ENCODE measurements at regions of chr15 and their contacts with region 1.

Region 1: GRCh38 chr15:32956006-32956405 is 238.2 kb downstream of the GREM1 start:
- DNase-seq: no peak
- ATAC-seq: peak; percentile 48; the same call in 1 of the 2 replicates
- H3K4me3 ChIP-seq: no peak overlapping the region
- H3K27ac ChIP-seq: no peak overlapping the region
- H3K4me1 ChIP-seq: no peaks in the 10 kb centered on the region
- H3K27me3 ChIP-seq: no peaks in the 10 kb centered on the region
- CTCF ChIP-seq: peak; percentile 74

Region 2: DNA sequence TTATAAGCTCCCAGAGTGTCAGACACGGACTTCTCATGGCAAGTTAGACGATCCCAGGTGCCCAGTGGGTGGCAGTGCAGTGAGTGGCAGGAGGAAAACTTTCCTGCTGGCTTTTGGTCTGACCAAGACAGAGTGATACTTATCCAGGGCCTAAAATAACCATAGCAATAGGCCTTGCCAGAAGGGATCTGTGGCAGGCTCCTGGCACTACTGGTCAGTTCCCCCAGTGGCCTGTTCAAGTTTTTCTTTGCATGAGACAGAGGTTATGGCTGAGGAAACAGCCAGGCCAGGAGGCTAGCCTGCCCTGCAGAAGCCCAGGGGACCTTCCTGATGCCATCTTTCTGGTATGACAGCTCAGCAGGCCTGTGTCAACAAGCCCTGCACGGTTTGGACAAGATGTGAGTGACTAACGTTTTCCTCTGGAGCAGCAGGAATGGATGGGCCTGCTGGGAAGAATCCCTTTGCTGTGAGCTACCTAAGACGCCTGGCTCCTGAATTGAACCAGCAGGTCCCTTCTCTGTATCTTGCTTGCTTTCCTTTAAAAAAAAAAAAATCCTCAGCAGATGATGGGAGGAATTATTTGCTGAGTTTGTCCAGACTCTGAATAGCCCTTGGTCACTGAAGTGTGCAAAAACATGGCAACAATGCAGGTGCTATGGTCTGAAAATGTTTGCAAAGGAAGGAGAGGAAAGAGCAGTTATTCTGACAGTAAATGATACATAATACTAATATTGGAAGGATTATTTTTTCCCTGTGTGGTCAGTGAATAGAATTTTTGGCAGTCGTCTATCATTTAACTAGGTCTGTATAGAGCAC is 296.5 kb before region 1 on chr15:
- CTCF ChIA-PET with region 1: no interaction called
- POLR2A ChIA-PET with region 1: no interaction called
- in situ Hi-C with region 1: no loop called
- intact Hi-C with region 1: loop called (anchors 10 kb)
- DNase-seq: peak; percentile 51
- ATAC-seq: peak; percentile 84
- H3K4me3 ChIP-seq: no peak overlapping the region
- H3K27ac ChIP-seq: no peak overlapping the region; the same call in 1 of the 2 replicates
- H3K4me1 ChIP-seq: peaks cover 6% of the 10 kb centered on the region; the same call in 1 of the 2 replicates
- H3K27me3 ChIP-seq: no peaks in the 10 kb centered on the region
- CTCF ChIP-seq: peak; percentile 4; the same call in 1 of the 2 replicates

Region 3: GRCh38 chr15:32849769-32850668 is 106.0 kb before region 1 on chr15:
- CTCF ChIA-PET with region 1: no interaction called
- POLR2A ChIA-PET with region 1: interaction called, 9 read pairs
- in situ Hi-C with region 1: no loop called
- intact Hi-C with region 1: loop called (anchors 5 kb)
- DNase-seq: no peak
- ATAC-seq: no peak
- H3K4me3 ChIP-seq: no peak overlapping the region
- H3K27ac ChIP-seq: no peak overlapping the region
- H3K4me1 ChIP-seq: no peaks in the 10 kb centered on the region
- H3K27me3 ChIP-seq: no peaks in the 10 kb centered on the region
- CTCF ChIP-seq: no peak

Region 4: DNA sequence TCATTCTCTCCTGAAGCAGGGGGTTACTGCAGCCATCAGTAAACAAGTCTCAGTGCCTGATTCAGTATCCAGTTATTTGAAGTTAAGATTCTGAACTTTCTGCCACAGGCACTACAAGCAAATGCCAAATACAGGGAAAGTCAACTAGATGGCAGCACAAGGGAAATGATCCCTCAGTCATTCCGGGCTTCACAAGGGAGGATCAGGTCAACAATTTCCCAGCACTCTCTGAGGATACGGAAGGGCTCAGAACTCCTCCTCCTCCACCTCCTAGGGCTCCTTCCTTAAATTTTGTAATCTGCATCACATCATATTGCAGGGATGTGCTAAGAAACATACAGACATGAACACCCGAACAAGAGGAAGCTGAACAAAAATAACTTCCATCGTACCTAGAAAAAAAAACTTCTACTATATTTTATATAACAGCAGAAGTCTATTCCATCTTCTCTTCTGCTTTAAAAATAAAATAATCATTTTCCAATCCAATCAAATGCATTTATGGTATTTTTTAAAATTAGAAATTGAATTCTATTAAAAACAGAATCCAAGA is 51.4 kb after region 1 on chr15:
- CTCF ChIA-PET with region 1: no interaction called
- POLR2A ChIA-PET with region 1: no interaction called
- in situ Hi-C with region 1: no loop called
- intact Hi-C with region 1: loop called (anchors 5 kb)
- DNase-seq: no peak
- ATAC-seq: peak; percentile 53; the same call in 1 of the 2 replicates
- H3K4me3 ChIP-seq: no peak overlapping the region
- H3K27ac ChIP-seq: no peak overlapping the region
- H3K4me1 ChIP-seq: no peaks in the 10 kb centered on the region
- H3K27me3 ChIP-seq: no peaks in the 10 kb centered on the region
- CTCF ChIP-seq: peak; percentile 49